Posterior cingulate gyrus (tissue), 11 donors: ENCODE measurements at regions of chr12 and their contacts with region 1.

Region 1: GRCh38 chr12:54191550-54192022 is 2.8 kb upstream of the SMUG1 start:
- DNase-seq: peak; percentile 57 to 97 (median 75)

Region 2: GRCh38 chr12:53727310-53728041 is 464.1 kb before region 1 on chr12 and contains the start of gene CALCOCO1:
- intact Hi-C with region 1: loop called (anchors 1 kb)
- DNase-seq: peak; percentile 96 to 100 (median 98)

Region 3: DNA sequence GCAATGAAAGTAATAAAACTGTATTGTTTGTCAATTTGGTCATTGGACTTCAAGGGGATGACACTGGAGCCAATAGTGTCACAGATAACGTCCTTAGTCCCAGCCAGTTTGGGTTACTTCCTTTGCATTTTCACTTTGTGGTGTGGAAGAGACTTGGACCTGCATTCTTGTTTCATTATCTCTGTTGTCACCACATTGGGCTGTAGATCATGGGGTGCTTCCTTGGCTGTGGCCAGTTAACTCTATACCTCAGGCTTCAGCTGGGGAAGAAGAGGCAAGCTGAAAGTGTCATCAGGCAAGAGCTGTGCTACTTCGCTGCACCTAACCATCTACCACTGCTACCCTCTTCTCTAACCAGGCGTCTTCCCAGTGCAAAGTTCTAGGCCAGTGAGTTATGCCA is 424.7 kb before region 1 on chr12:
- intact Hi-C with region 1: loop called (anchors 10 kb)
- DNase-seq: no peak

Region 4: GRCh38 chr12:53938326-53939140 is 253.1 kb before region 1 on chr12 and contains the start of gene HOXC13:
- intact Hi-C with region 1: no loop called
- DNase-seq: no peak

Region 5: DNA sequence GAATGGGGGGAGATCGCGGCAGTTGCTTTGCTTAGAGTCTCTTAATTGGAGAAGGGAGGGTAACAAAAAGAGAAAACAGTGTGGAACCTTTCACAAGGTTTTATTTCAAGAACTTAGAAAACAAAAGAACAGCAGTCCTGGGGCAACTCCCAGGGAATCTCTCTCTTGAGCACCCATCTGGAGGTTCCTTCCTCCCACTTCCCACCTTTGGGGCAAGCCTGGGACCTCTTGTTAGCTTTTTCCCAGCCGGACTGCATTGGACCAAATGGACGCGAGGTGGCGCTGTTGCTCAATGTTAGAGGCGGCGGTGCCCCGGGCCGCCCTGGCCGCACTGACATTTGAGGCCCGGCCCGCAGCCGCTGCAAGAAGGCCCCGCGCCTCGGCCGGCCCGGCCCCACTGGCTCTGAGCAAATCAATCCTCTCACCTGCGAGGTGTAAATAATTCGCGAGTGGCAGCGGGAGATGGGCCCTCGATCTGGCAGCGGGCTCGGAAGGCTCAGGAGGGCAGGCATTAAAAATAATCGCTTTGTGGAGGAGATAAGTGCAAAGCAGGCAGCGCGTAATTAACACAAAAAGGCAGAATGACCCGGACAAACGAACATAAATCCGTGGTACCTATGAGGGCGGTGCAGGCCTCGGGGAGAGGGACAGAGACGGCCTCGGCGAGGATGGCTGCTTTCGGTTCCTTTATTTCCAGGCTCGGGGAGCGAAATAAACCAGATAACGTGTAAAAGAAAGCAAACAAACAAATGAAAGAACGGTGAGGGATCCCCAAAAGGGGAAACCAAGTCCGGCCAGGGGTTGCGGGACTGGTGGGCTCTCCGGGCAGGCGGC is 185.5 kb before region 1 on chr12:
- intact Hi-C with region 1: loop called (anchors 1 kb)
- DNase-seq: peak; percentile 44 to 97 (median 82)

Region 6: GRCh38 chr12:54032627-54033100 is 158.9 kb before region 1 on chr12 and contains the start of gene HOXC5:
- intact Hi-C with region 1: loop called (anchors 2 kb)
- DNase-seq: peak in 5 of 10 donors; percentile 18 to 89 (median 34)